ENCODE measurements at regions of chr4 and their contacts with region 1.

Region 1: GRCh38 chr4:113394730-113395530 is 345.5 kb downstream of the ANK2 start:
- DNase-seq: no peak
- H3K4me3 ChIP-seq: no peak overlapping the region
- H3K27ac ChIP-seq: peak overlapping the region in 2 of 4 donors; percentile 3 to 48
- H3K4me1 ChIP-seq: peaks cover 0 to 23% (median 16%) of the 10 kb centered on the region in 4 donors
- H3K27me3 ChIP-seq: no peaks in the 10 kb centered on the region
- CTCF ChIP-seq: peak; percentile 86 to 91 (median 87)
- EP300 ChIP-seq: no peak
- POLR2A ChIP-seq: no peak

Region 2: GRCh38 chr4:113146876-113147358 is 248.0 kb before region 1 on chr4:
- intact Hi-C with region 1: no loop called
- DNase-seq: no peak
- H3K4me3 ChIP-seq: peak overlapping the region; percentile 23 to 43 (median 40)
- H3K27ac ChIP-seq: peak overlapping the region; percentile 22 to 63 (median 46)
- H3K4me1 ChIP-seq: peaks cover 0 to 14% (median 10%) of the 10 kb centered on the region in 4 donors
- H3K27me3 ChIP-seq: no peaks in the 10 kb centered on the region
- CTCF ChIP-seq: no peak
- EP300 ChIP-seq: no peak
- POLR2A ChIP-seq: no peak

Region 3: GRCh38 chr4:113435893-113436292 is 41.0 kb after region 1 on chr4:
- intact Hi-C with region 1: loop called (anchors 5 kb)
- DNase-seq: no peak
- H3K4me3 ChIP-seq: no peak overlapping the region
- H3K27ac ChIP-seq: peak overlapping the region; percentile 44 to 70 (median 51)
- H3K4me1 ChIP-seq: peaks cover 18 to 35% (median 24%) of the 10 kb centered on the region in 4 donors
- H3K27me3 ChIP-seq: no peaks in the 10 kb centered on the region
- CTCF ChIP-seq: no peak
- EP300 ChIP-seq: no peak
- POLR2A ChIP-seq: no peak

Region 4: DNA sequence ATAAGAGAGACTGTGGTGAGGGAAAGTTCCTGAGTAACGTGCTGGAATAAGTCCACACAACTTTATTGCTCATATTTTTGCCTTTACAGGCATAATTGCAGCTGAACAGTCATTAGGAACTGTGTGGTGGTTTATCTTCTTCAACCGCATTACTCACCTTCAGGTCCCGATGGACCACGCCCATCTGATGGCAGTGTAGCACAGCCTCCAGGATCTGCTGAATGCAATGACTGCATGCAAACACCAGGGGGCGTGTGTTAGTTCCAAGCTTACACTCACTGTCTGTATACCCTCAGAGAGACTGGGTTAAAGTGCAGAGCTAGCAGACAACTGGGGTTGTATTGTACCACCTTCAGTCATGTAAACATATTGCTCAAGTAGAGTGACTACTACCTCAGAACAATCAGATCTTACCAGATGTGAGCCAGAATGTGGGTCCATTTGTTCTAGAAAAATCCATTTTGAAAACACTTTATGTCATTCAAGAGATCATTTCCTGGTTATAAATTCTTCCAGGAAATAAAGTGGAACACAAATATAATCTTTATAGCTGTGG is 152.6 kb after region 1 on chr4:
- intact Hi-C with region 1: loop called (anchors 2 kb)
- DNase-seq: peak; percentile 95
- H3K4me3 ChIP-seq: no peak overlapping the region
- H3K27ac ChIP-seq: peak overlapping the region in 3 of 4 donors; percentile 30 to 61 (median 49)
- H3K4me1 ChIP-seq: peaks cover 4 to 13% (median 11%) of the 10 kb centered on the region in 4 donors
- H3K27me3 ChIP-seq: no peaks in the 10 kb centered on the region
- CTCF ChIP-seq: peak; percentile 94 to 99 (median 97)
- EP300 ChIP-seq: no peak
- POLR2A ChIP-seq: no peak

Region 5: DNA sequence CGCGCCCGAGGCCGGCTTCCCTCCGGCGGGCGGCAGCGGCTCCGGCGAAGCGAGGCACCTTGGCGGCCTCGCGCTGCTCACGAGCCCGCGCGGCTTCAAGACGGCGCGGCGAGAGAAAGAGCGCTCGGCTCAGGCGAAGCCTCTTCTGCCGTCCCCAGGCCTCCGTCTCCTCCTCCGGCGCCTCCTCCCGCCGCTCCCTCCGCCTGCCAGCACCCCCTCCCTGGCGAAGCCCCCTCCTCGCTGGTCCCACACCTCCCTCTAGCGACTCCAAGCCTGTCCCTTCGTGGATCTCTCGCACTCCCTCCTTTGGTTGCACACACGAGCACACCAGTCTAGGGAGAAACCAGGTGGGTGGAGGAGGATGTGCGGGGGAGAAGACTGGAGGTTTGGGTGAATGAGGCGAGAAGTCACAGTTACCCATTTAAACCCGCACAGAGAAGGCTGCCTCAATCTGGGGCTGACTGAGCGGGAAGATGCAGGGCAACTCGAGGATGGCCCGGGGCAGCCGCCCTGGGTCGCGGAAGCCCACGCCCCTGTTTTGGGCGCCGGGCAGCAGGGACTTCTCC is 366.8 kb after region 1 on chr4 and contains the start of gene CAMK2D:
- intact Hi-C with region 1: loop called (anchors 2 kb)
- DNase-seq: peak; percentile 94
- H3K4me3 ChIP-seq: peak within 1 kb of the TSS; percentile 66 to 91 (median 78)
- H3K27ac ChIP-seq: peak within 1 kb of the TSS; percentile 96 to 99 (median 98)
- H3K4me1 ChIP-seq: peaks cover 8 to 36% (median 34%) of the 10 kb centered on the region in 4 donors
- H3K27me3 ChIP-seq: no peaks in the 10 kb centered on the region
- CTCF ChIP-seq: peak; percentile 58 to 64 (median 62)
- EP300 ChIP-seq: no peak
- POLR2A ChIP-seq: peak; percentile 33
- total RNA-seq, gene CAMK2D: 48.2 to 66.2 (median 51.2) TPM

Region 6: DNA sequence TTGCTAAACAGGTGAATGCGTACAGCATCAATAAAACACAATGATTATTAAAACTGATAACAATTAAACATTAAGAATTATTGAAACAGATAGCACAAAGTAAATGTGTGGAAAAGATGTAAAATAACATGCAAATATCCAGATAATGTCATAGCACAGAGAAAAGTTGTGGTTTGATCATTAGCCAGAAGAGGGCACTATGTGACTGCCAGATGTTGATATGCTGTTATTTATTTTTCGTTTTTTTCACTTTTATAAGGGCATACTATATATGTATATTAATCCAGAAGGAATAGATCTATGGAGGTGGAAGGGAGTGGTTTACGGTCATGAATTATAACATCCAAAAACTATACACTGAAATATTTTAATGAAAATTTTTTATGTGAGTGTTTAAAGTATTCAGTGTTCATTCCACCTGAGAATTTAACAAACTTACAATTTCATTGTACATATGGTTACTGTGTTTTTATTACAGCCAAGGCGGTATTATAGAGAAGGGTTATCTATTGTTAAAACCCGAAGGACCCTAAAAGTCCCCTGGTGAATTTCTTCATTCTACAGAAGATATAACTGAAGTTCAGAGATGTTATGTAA is 991.8 kb after region 1 on chr4:
- intact Hi-C with region 1: loop called (anchors 10 kb)
- DNase-seq: no peak
- H3K4me3 ChIP-seq: no peak overlapping the region
- H3K27ac ChIP-seq: no peak overlapping the region
- H3K4me1 ChIP-seq: peaks cover 0 to 8% (median 3%) of the 10 kb centered on the region in 4 donors
- H3K27me3 ChIP-seq: no peaks in the 10 kb centered on the region
- CTCF ChIP-seq: peak; percentile 57 to 66 (median 57)
- EP300 ChIP-seq: no peak
- POLR2A ChIP-seq: no peak

Measured in esophagus muscularis mucosa (tissue), 4 donors.